WTC11 (cell line): ENCODE measurements at regions of chr13 and their contacts with region 1.

Region 1: GRCh38 chr13:79679334-79679733 is 198.4 kb downstream of the NDFIP2 start:
- DNase-seq: peak; percentile 79
- ATAC-seq: peak; percentile 74
- H3K4me3 Mint-ChIP-seq: no peak overlapping the region
- H3K27ac Mint-ChIP-seq: no peak overlapping the region
- H3K4me1 Mint-ChIP-seq: peaks cover 8% of the 10 kb centered on the region
- H3K27me3 Mint-ChIP-seq: no peaks in the 10 kb centered on the region
- CTCF ChIP-seq: peak; percentile 93

Region 2: DNA sequence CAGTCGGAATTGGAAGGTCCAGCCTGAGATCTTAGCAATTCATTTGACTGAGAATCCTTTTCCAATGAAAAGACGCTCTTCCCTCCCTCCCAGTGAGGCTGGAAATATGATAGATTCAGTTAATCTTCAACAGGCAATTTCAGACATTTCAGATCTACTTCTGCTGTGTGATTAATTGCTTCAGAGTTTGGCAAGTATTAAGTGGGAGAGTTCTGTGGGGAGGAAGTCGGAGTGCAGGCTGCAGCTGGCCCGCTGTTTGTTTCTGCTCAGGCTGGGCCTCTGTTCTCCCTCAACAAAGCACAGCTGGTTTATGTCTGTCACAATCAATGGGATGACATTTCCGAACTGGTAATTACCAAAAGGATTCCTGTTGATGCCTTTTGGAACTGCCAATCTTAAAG is 20.2 kb before region 1 on chr13:
- CTCF ChIA-PET with region 1: interaction called, 10 read pairs
- POLR2A ChIA-PET with region 1: no interaction called
- DNase-seq: no peak
- ATAC-seq: peak; percentile 71
- H3K4me3 Mint-ChIP-seq: no peak overlapping the region
- H3K27ac Mint-ChIP-seq: peak overlapping the region; percentile 69
- H3K4me1 Mint-ChIP-seq: peaks cover 15% of the 10 kb centered on the region
- H3K27me3 Mint-ChIP-seq: no peaks in the 10 kb centered on the region
- CTCF ChIP-seq: no peak

Region 3: GRCh38 chr13:79668201-79668752 is 11.1 kb before region 1 on chr13:
- CTCF ChIA-PET with region 1: interaction called, 10 read pairs
- POLR2A ChIA-PET with region 1: no interaction called
- DNase-seq: no peak
- ATAC-seq: no peak
- H3K4me3 Mint-ChIP-seq: no peak overlapping the region
- H3K27ac Mint-ChIP-seq: no peak overlapping the region
- H3K4me1 Mint-ChIP-seq: peaks cover 6% of the 10 kb centered on the region
- H3K27me3 Mint-ChIP-seq: no peaks in the 10 kb centered on the region
- CTCF ChIP-seq: no peak

Region 4: GRCh38 chr13:80022146-80022545 is 342.8 kb after region 1 on chr13:
- CTCF ChIA-PET with region 1: no interaction called
- POLR2A ChIA-PET with region 1: no interaction called
- DNase-seq: no peak
- ATAC-seq: no peak
- H3K4me3 Mint-ChIP-seq: no peak overlapping the region
- H3K27ac Mint-ChIP-seq: no peak overlapping the region
- H3K4me1 Mint-ChIP-seq: peaks cover 11% of the 10 kb centered on the region
- H3K27me3 Mint-ChIP-seq: no peaks in the 10 kb centered on the region
- CTCF ChIP-seq: no peak

Region 5: DNA sequence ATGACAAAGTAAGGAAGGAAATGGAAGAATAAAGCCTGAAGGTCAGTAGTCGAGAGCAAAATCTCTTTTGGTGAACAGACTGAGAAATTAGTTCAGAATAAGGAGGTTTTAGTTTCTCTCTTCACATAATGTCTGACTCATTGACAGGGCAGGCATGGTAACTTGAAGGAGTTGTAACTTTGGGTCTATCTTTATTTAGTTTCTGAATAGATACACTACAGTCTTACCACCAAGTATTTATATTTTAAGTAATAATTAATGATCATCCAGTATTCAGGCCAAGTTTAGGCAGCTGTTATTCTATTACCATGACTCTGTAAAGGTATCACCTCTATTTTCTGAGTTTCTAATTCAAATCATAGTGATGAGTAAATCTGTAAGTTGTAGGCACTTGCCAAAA is 441.7 kb after region 1 on chr13:
- CTCF ChIA-PET with region 1: no interaction called
- POLR2A ChIA-PET with region 1: no interaction called
- DNase-seq: no peak
- ATAC-seq: no peak
- H3K4me3 Mint-ChIP-seq: no peak overlapping the region
- H3K27ac Mint-ChIP-seq: no peak overlapping the region; the same call in 1 of the 2 replicates
- H3K4me1 Mint-ChIP-seq: peaks cover 25% of the 10 kb centered on the region
- H3K27me3 Mint-ChIP-seq: no peaks in the 10 kb centered on the region
- CTCF ChIP-seq: no peak